Right ventricle myocardium inferior (tissue), 1 donor: ENCODE measurements at regions of chr17 and their contacts with region 1.

Region 1: GRCh38 chr17:73371285-73371684 is 59.5 kb upstream of the CDC42EP4 start:
- DNase-seq: peak; percentile 16
- ATAC-seq: no peak

Region 2: DNA sequence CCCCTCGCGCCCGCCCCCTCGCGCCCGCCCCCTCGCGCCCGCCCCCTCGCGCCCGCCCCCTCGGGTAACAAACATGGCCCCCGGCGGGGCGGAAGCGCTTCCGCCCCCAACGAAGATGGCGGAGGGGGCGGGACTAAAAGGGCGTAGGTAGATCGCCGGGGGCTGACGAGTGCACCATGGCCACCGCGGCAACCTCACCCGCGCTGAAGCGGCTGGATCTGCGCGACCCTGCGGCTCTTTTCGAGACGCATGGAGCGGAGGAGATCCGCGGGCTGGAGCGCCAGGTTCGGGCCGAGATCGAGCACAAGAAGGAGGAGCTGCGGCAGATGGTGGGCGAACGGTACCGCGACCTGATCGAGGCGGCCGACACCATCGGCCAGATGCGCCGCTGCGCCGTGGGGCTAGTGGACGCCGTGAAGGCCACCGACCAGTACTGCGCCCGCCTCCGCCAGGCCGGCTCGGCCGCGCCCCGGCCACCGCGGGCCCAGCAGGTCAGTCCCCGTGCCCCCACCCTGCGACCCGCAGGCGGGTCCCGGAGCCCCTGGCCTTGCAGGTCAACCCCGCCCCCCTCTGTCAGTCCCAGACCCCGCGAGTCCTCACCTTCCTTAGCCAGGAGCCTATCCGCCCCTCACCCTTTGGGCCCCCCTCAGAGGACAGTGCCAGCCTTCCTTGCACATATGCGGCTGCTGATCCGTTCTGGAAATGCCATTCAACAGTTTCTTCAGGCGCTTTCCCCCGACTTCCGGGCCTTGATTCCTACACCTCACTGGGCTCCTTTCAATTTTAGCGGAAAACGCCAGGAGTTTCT is 178.2 kb before region 1 on chr17 and contains the start of gene COG1:
- intact Hi-C with region 1: loop called (anchors 2 kb)
- DNase-seq: peak; percentile 94
- ATAC-seq: peak; percentile 88
- total RNA-seq, gene COG1: 49.3 TPM

Region 3: GRCh38 chr17:73255671-73256181 is 115.6 kb before region 1 on chr17:
- intact Hi-C with region 1: loop called (anchors 1 kb)
- DNase-seq: no peak
- ATAC-seq: peak; percentile 32

Region 4: DNA sequence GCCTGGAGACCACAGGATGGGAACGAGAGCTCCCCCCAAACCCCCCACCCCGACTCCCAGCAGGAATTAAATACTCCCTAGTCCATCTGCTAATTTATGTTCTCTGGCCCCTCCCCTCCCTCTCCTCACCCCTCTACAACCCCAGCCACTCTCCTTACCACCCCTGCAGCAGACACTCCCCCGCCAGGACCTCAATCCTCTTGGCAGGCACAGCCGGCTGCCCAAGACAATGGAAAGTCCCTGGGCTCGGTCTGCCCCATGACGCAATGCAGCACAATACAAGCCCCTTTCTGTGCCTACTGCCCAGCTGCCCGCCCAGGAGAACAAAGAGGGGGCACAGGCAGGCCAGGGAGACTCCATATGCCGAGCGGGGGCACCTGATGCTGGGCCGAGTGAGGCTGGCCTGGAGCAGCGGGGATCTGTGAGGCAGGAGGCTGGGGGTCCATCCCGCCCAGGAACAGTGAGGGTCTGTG is 29.2 kb before region 1 on chr17:
- intact Hi-C with region 1: no loop called
- DNase-seq: peak; percentile 76
- ATAC-seq: peak; percentile 49